GM12878 (cell line): ENCODE measurements at regions of chr9 and their contacts with region 1.

Region 1: DNA sequence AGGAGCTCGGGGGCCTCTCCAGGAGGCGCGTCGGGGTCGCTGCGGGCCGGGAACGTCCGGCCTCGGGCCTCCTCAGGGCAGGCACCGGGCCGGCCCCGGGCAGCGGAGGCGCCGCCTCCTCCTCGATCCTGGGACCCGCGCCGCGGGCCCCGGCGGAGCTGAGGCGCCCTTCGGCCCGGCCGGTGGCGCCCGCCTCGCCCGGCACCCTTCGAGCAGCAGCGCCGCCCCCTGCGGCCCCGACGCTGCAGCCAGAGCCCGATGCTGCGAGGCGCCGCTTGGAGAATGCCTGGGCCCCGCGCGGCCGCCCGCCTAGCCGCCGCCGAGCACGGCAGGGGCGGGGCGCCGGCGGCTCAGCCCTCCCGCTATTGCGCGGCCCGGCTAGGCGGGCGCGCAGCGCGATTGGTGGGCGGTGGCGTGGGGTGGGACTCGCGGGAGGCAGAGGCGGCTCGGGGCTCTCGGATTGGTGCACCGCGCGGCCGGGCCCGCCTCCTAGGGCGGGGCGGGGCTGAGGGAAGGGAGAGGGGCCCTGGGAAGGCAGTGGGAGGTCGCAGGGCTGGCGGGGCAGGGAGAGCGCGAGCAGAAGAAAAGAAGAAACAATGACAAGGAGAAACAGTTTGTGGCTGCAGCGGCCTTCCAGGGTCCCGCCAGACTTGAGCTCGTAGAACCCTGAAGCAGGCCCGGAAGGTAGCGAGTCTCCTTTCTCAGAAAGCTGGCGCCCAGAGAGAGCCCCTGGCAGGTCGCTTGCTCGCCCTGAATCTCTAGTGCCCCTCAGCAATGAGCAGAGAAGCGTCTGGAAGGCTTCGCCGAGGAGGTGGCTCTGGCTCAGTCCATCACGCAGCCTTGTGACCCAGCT is at the start of gene EEIG1:
- DNase-seq: no peak
- ATAC-seq: peak; percentile 88
- H3K4me3 ChIP-seq: peak within 1 kb of the TSS; percentile 93
- H3K27ac ChIP-seq: peak within 1 kb of the TSS; percentile 76
- H3K4me1 ChIP-seq: peaks cover 53% of the 10 kb centered on the region
- H3K27me3 ChIP-seq: no peaks in the 10 kb centered on the region
- CTCF ChIP-seq: no peak
- EP300 ChIP-seq: no peak
- POLR2A ChIP-seq: peak; percentile 91
- RAD21 ChIP-seq: no peak
- polyA plus RNA-seq, gene EEIG1: 1.2 to 2.7 TPM

Region 2: DNA sequence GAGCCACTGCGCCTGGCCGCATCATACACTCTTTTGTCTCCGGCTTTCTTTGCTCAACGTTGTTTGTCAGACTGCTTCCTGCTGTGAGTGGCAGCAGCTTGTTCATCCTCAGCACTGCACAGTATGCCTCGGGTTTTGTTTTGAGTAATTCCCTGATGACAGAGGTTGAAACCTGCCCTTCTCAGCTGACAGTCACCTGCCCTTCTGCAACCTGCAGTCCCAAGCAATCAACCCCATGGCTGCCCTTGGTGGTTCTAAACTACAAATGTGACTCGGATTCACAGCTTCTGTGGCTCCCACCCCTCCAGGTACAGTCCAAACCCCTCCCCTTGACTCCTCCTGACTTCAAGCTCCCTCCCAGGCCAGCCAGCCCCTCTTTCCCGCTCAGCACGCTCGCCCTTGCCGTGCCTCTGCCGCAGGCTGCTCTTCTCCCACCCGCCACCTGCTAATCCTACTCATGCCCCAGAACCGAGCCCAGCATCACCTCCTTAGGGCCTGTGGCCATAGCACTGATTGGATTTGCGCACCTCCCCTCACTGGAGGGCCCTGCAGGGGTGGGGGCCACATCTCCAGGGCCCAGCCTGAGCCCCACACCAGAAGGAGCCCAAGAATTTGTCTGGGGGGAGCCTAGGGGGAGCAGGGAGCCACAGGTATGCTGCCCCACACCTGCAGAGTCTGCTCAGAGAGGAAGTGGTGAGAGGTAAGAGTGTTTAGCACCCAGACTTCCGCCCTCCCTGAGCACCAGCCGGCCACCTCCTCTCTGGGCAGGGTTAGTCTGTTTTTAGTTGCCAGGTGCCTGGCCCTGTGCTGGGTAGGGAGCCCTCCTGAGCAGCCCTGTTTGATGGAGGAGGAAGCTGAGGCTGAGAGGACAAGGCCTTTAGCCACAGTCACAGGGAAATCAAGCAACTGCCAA is 10.3 kb before region 1 on chr9:
- CTCF ChIA-PET with region 1: interaction called, 5 read pairs
- POLR2A ChIA-PET with region 1: interaction called, 22 read pairs
- RAD21 ChIA-PET with region 1: interaction called, 7 read pairs
- SMC1A ChIA-PET with region 1: interaction called, 14 read pairs
- in situ Hi-C with region 1: no loop called
- intact Hi-C with region 1: no loop called
- DNase-seq: peak; percentile 95
- ATAC-seq: peak; percentile 92
- H3K4me3 ChIP-seq: peak overlapping the region; percentile 50; the same call in 1 of the 2 replicates
- H3K27ac ChIP-seq: peak overlapping the region; percentile 63
- H3K4me1 ChIP-seq: peaks cover 50% of the 10 kb centered on the region
- H3K27me3 ChIP-seq: no peaks in the 10 kb centered on the region
- CTCF ChIP-seq: no peak
- EP300 ChIP-seq: peak; percentile 72 to 90; a peak in 3 of 4 replicates
- POLR2A ChIP-seq: no peak; the same call in 1 of the 2 replicates
- RAD21 ChIP-seq: no peak